ENCODE measurements at regions of chrX and their contacts with region 1.

Region 1: DNA sequence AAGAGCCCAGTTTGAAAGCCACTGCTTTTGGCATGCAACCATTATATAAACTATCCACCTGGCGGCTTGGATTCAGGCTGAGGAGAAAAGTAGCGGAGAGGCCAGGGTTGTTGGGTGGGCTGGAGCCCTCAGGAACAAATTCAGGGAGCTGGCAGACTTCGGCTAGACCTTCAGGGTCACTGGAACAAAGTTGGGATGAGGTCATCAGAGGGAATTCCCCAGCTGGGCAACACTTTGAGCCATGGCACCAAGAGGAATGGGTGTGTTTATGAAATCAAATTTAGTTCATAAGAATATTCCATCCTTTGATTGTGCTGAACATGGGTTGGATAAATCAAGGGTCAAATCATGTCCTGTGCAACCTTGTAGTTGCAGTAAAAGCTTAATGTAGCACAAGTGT is 22.0 kb downstream of the MTMR1 start:
- DNase-seq: no peak
- ATAC-seq: no peak
- H3K4me3 ChIP-seq: no peak overlapping the region
- H3K27ac ChIP-seq: no peak overlapping the region
- H3K4me1 ChIP-seq: 0 out of 2 replicates have a peak, but pooled peaks cover 2% of the 10 kb centered on the region
- H3K27me3 ChIP-seq: no peaks in the 10 kb centered on the region
- CTCF ChIP-seq: no peak
- POLR2A ChIP-seq: no peak
- RAD21 ChIP-seq: no peak

Region 2: DNA sequence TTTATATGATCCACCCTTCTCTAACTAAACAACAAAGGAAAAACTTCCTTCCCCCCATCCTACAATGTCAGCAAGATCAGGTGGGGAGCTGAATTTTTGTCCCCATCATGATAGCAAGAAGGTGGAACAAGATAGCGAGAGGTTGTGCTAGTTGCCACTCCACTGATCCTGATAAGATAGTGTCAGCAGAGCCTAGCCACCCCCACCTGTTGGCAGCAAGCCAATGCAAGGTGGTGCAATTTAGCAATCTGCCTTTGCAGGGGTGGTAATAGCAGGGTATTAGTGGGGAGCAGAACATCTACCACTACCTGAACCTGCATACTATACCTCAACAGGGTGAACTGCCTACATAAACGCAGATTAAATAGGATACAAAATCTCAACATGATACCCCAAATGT is 432.2 kb before region 1 on chrX:
- CTCF ChIA-PET with region 1: no interaction called
- POLR2A ChIA-PET with region 1: no interaction called
- dilution Hi-C with region 1: no loop called
- in situ Hi-C with region 1: no loop called
- intact Hi-C with region 1: no loop called
- DNase-seq: no peak
- ATAC-seq: no peak
- H3K4me3 ChIP-seq: no peak overlapping the region
- H3K27ac ChIP-seq: no peak overlapping the region
- H3K4me1 ChIP-seq: no peaks in the 10 kb centered on the region
- H3K27me3 ChIP-seq: peaks cover 5% of the 10 kb centered on the region
- CTCF ChIP-seq: no peak
- POLR2A ChIP-seq: no peak
- RAD21 ChIP-seq: no peak

Region 3: GRCh38 chrX:150486011-150486410 is 229.2 kb before region 1 on chrX:
- CTCF ChIA-PET with region 1: no interaction called
- POLR2A ChIA-PET with region 1: no interaction called
- dilution Hi-C with region 1: no loop called
- in situ Hi-C with region 1: no loop called
- intact Hi-C with region 1: loop called (anchors 1 kb)
- DNase-seq: peak; percentile 59
- ATAC-seq: peak; percentile 75
- H3K4me3 ChIP-seq: no peak overlapping the region
- H3K27ac ChIP-seq: no peak overlapping the region
- H3K4me1 ChIP-seq: peaks cover 3% of the 10 kb centered on the region; the same call in 1 of the 2 replicates
- H3K27me3 ChIP-seq: no peaks in the 10 kb centered on the region
- CTCF ChIP-seq: peak; percentile 57
- POLR2A ChIP-seq: no peak
- RAD21 ChIP-seq: peak; percentile 63

Region 4: DNA sequence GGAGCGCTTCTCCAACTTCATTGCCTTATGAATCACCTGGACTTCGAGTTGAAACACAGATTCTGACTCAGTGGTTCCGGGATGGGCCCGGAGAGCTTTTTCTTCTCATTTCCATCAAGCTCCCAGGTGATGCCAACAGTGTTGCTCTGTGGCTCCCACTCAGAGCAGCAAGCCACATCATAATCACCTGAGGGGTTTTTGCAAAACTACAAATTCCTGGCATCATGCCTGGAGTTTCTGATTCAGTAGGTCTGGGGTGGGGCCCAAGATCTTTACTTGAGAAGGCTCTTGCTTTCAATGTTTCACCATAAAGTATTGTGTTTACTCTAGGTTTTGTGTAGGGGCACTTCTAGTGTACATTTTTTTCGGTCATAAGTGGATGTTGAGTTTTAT is 139.8 kb before region 1 on chrX:
- CTCF ChIA-PET with region 1: no interaction called
- POLR2A ChIA-PET with region 1: interaction called, 11 read pairs
- dilution Hi-C with region 1: no loop called
- in situ Hi-C with region 1: no loop called
- intact Hi-C with region 1: loop called (anchors 10 kb)
- DNase-seq: peak; percentile 33
- ATAC-seq: no peak
- H3K4me3 ChIP-seq: no peak overlapping the region
- H3K27ac ChIP-seq: no peak overlapping the region
- H3K4me1 ChIP-seq: peaks cover 6% of the 10 kb centered on the region
- H3K27me3 ChIP-seq: no peaks in the 10 kb centered on the region
- CTCF ChIP-seq: no peak
- POLR2A ChIP-seq: no peak
- RAD21 ChIP-seq: no peak

Region 5: GRCh38 chrX:150664290-150664689 is 50.9 kb before region 1 on chrX:
- CTCF ChIA-PET with region 1: no interaction called
- POLR2A ChIA-PET with region 1: interaction called, 16 read pairs
- dilution Hi-C with region 1: no loop called
- in situ Hi-C with region 1: no loop called
- intact Hi-C with region 1: no loop called
- DNase-seq: no peak
- ATAC-seq: no peak
- H3K4me3 ChIP-seq: no peak overlapping the region
- H3K27ac ChIP-seq: no peak overlapping the region
- H3K4me1 ChIP-seq: peaks cover 3% of the 10 kb centered on the region
- H3K27me3 ChIP-seq: no peaks in the 10 kb centered on the region
- CTCF ChIP-seq: no peak
- POLR2A ChIP-seq: no peak
- RAD21 ChIP-seq: no peak

Region 6: DNA sequence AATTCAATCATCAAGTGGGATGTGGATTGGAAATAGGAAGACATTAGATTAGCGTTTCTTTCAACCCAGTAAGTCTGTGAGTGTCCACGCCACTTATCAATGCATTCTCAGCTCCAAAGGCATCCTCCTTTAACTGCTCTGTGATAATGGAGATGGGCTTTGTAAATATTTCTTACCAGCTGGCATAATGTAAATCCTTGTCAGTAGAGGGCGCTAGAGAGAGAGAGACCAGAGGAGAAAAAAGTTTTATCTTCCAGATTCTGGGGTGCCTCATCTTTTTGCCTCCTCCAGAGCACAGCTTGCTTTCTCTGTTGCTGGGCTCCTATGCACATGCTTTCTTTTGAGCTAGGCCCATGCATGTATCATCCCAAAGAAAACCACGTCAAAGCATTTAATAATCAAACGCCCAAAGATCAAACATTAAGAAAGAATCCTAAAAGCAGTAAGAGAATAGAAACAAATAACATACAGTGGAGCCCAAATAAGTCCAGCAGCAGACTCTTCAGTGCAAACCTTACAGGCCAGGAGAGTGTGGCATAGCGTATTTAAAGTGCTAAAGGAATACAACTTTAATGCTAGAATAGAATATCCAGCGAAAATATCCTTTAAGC is 31.5 kb before region 1 on chrX:
- CTCF ChIA-PET with region 1: interaction called, 8 read pairs
- POLR2A ChIA-PET with region 1: no interaction called
- dilution Hi-C with region 1: no loop called
- in situ Hi-C with region 1: no loop called
- intact Hi-C with region 1: loop called (anchors 2 kb)
- DNase-seq: peak; percentile 33
- ATAC-seq: peak; percentile 32; the same call in 1 of the 2 replicates
- H3K4me3 ChIP-seq: no peak overlapping the region
- H3K27ac ChIP-seq: no peak overlapping the region
- H3K4me1 ChIP-seq: peaks cover 4% of the 10 kb centered on the region
- H3K27me3 ChIP-seq: no peaks in the 10 kb centered on the region
- CTCF ChIP-seq: peak; percentile 51
- POLR2A ChIP-seq: no peak
- RAD21 ChIP-seq: peak; percentile 37